Dendritic cell treated with granulocyte-macrophage colony-stimulating factor and Interleukin-4, amounts not matched to agents 40 ng/mL and 50 ng/mL, for 4 days (primary cell): ENCODE measurements at regions of chr6 and their contacts with region 1.

Region 1: DNA sequence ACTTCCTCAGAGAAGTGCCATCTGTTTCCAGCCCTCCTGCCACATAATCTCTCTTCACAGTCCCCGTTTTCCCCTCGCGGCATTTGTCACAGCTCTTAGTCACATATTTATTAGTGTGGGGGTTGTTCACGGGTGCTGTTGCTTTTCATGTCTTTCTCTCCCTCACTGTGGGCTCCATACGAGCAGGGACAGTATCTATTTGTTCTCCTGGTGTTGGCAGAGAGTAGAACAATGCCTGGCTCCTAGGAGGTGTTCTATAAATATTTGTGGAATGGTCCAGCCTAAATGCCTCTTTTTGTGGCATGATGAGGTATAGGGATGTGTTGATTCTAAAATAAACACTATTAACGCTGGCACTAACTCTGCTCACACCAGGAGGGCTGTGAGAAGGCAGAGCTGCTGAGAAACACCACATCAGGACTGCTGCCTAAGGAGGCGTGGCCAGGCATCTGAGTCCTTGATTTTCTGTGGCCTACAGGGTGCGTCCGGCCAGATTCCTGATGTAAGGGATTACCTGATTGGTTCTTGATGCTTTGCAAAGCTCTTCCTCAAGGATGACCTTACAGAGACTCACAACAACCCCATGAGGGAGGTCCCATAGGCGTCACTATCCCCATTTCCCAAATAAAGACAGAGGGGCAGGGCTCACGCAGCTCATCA is 219.8 kb upstream of the ARID1B start:
- H3K4me3 Mint-ChIP-seq: no peak overlapping the region
- H3K27ac Mint-ChIP-seq: no peak overlapping the region
- H3K4me1 Mint-ChIP-seq: peaks cover 10% of the 10 kb centered on the region
- H3K27me3 Mint-ChIP-seq: no peaks in the 10 kb centered on the region

Region 2: GRCh38 chr6:155333414-155333813 is 1224.0 kb before region 1 on chr6:
- intact Hi-C with region 1: loop called (anchors 5 kb)
- H3K4me3 Mint-ChIP-seq: no peak overlapping the region
- H3K27ac Mint-ChIP-seq: no peak overlapping the region
- H3K4me1 Mint-ChIP-seq: no peaks in the 10 kb centered on the region
- H3K27me3 Mint-ChIP-seq: no peaks in the 10 kb centered on the region